ENCODE measurements at regions of chr6 and their contacts with region 1.

Region 1: DNA sequence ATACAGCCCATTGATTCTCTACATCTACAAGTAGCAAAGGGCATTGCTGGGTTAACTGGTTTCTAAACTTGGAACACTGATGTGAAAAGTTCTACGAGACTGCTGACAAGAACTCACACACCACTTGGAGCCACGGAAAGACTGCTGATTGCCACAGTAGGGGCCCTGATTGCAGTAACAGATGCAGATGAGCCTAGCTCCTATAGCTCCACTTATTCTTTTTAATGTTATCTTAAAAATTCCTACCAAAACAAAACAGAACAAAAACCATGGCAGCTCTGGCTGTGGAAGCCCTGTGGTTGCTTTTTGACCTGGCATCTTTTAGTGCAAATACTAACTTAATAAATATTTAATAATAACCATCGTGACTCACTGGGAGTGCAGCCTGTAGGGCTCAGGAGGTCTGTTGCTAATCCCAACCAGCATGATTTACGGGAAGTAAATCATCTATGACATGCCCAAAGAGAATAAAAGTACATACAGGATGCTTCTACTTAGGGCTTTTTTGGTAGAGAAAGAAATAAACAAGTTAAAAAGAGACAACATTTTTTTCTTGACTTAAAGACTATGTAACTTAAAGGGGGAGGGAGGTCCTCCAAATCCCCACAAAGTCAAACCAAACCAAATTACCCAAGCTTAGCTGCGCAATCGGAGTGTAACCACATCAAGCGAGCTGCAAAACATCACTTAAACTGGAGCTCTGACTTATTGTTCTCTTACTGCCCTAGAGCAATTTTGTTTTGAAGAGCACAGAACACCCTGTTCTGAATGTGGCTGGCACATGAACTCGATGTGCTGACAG is 87.2 kb downstream of the FKBP5 start:
- DNase-seq: peak in 1 of 2 donors; percentile 25
- ATAC-seq: peak; percentile 72 to 92 (median 88)
- H3K4me3 ChIP-seq: peak overlapping the region in 7 of 10 donors; percentile 2 to 41 (median 29)
- H3K27ac ChIP-seq: peak overlapping the region; percentile 84 to 96 (median 91)
- H3K4me1 ChIP-seq: peaks cover 14 to 94% (median 46%) of the 10 kb centered on the region in 9 donors
- H3K27me3 ChIP-seq: no peaks in the 10 kb centered on the region
- CTCF ChIP-seq: no peak

Region 2: DNA sequence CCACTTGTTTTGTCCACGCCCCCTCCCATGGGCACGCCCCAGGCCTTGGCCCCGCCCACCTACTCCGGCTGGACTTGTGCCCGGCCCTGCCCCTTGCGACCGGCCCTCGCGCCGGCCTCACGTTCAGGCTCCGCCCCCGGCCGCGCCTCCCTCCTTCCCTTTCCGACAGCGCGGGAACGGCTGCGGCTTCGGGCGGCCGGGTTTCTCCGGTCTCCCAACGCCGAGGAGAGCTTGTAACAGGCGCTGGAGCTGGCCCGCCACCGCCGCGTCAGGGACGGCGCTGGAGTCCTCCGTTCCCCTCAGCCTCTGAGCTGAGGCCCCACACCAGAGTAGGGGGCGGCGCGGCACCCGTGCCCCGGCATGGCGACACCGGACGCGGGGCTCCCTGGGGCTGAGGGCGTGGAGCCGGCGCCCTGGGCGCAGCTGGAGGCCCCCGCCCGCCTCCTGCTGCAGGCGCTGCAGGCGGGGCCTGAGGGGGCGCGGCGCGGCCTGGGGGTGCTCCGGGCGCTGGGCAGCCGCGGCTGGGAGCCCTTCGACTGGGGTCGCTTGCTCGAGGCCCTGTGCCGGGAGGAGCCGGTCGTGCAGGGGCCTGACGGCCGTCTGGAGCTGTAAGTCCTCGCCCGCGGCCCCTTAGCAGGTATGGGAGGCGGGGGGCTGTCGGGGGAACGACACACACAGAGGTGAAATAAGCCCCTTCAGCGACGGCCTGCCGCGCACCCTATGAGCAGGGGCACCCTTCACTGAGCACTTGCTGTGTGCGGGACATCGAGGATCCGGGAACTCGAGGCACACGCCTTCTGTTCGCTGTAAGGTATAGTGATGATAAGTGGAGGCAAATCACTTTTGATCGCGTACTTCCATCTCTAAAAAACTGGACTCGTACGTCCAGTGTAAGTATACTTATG is 149.1 kb before region 1 on chr6 and contains the start of gene FANCE:
- intact Hi-C with region 1: no loop called
- DNase-seq: peak; percentile 94 to 97
- ATAC-seq: peak; percentile 95 to 98 (median 96)
- H3K4me3 ChIP-seq: peak within 1 kb of the TSS; percentile 2 to 79 (median 66)
- H3K27ac ChIP-seq: peak within 1 kb of the TSS; percentile 14 to 86 (median 74)
- H3K4me1 ChIP-seq: peaks cover 3 to 44% (median 29%) of the 10 kb centered on the region in 9 donors
- H3K27me3 ChIP-seq: no peaks in the 10 kb centered on the region
- CTCF ChIP-seq: no peak
- total RNA-seq, gene FANCE: 1.5 to 5.3 (median 3.0) TPM

Region 3: DNA sequence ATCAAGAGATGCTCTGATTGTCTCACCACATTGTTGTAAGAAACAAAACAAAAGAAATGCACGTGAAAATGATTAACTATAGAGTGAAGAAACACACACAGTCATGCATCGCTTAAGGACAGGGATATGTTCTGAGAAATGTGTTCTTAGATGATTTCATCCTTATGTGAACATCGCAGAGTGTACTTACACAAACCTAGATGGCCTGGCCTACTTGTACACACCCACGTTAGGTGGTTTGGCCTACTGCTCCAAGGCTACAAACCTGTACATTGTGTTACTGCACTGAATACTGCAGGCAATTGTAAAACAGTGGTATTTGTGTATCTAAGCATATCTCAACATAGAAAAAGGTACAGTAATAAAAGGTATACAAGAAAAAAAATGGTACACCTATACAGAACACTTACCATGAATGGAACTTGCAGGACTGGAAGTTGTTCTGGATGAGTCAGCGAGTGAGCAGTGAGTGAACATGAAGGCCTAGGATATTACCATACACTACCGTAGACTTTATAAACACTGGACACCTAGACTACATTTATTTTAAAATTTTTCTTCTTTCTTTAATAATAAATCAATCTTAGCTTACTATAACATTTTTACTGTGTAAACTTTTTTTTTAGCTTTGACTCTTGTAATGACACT is 38.6 kb after region 1 on chr6:
- intact Hi-C with region 1: loop called in 1 of 10 experiments (anchors 1 kb)
- DNase-seq: no peak
- ATAC-seq: no peak
- H3K4me3 ChIP-seq: no peak overlapping the region
- H3K27ac ChIP-seq: no peak overlapping the region
- H3K4me1 ChIP-seq: peaks cover 0 to 12% (median 0%) of the 10 kb centered on the region in 9 donors
- H3K27me3 ChIP-seq: no peaks in the 10 kb centered on the region
- CTCF ChIP-seq: no peak

Region 4: GRCh38 chr6:35698858-35699257 is 97.3 kb after region 1 on chr6:
- intact Hi-C with region 1: no loop called
- DNase-seq: no peak
- ATAC-seq: no peak
- H3K4me3 ChIP-seq: no peak overlapping the region
- H3K27ac ChIP-seq: no peak overlapping the region
- H3K4me1 ChIP-seq: no peaks in the 10 kb centered on the region
- H3K27me3 ChIP-seq: no peaks in the 10 kb centered on the region
- CTCF ChIP-seq: no peak

Region 5: DNA sequence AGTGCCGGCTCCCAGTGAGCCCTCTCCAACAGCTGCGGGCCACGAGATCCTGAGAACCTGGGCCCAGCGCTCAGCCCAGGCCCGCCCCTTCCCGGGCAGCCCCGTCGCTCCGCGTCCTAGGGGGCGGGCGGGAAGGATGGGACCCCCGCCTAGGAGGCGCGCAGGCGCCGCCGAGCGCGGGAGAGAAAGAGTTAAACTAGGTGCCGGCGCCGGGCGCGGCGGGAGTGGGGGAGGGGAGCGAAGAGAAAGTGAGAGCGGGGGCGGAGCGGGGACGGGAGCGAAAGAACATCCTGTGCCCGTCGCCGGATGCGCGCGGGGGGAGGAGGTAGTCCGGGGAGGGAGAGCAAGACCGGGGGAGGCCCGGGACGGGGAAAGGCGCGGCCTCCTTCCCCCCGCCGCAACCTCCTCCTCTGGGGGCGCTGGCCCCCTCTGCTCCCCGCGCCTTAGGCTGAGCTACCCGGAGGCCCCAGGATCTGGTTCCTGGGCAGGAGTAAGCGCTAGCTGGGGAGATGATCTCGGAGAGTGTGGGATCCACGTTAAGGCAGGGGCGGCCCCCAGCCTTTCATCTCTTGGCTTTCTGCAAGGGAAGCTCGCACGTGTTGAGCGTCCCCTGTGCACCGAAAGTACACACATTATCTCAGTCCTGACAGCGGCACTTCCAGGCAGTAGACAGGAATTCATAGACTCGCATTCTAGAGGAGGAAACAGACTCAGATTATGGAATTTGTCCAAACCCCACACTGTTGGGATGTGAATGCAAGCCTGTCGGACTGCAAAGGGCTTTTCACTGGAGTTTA is 130.4 kb after region 1 on chr6:
- intact Hi-C with region 1: loop called in 4 of 10 experiments (anchors 1 to 5 kb)
- DNase-seq: peak; percentile 95 to 98
- ATAC-seq: peak; percentile 60 to 86 (median 77)
- H3K4me3 ChIP-seq: peak overlapping the region; percentile 42 to 96 (median 84)
- H3K27ac ChIP-seq: peak overlapping the region; percentile 98 to 100 (median 100)
- H3K4me1 ChIP-seq: peaks cover 21 to 80% (median 56%) of the 10 kb centered on the region in 9 donors
- H3K27me3 ChIP-seq: no peaks in the 10 kb centered on the region
- CTCF ChIP-seq: peak in 5 of 9 donors; percentile 9 to 47 (median 21)

Region 6: DNA sequence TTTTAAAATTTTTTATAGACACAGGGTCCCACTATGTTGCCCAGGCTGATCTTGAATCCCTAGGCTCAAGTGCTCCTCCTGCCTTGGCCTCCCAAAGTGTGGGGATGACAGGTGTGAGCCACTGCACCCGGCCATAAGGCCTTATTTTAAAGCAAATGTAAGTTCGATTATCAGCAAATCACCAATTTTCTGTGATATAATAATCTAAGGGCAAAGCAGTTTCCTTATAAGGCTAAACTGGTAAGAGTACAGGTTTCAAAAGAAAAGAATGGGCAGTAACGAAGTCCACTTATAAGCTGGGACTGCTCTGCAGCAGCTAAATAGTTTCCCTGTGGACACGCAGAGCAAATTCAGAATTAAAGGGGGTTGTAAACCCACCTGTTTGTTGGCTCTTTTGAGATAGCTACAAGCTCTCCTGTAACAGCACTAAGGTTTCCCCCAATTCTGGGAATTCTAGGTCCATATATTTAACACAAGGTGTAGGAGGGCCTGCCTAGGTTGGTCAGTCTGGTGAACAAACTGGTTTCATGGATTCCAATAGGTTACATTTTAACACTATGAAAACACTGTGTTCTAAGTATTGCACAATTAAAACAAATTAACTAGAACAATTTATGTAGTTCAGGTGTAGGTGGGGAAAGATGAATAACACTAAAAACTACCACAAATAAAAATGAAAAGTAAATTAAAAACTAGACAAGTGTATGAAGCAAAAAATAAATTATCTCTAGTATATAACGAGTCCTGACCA is 229.9 kb after region 1 on chr6:
- intact Hi-C with region 1: no loop called
- DNase-seq: no peak
- ATAC-seq: no peak
- H3K4me3 ChIP-seq: no peak overlapping the region
- H3K27ac ChIP-seq: no peak overlapping the region
- H3K4me1 ChIP-seq: no peaks in the 10 kb centered on the region
- H3K27me3 ChIP-seq: peaks cover 0 to under 1% (median 0%) of the 10 kb centered on the region in 7 donors
- CTCF ChIP-seq: no peak

Region 7: DNA sequence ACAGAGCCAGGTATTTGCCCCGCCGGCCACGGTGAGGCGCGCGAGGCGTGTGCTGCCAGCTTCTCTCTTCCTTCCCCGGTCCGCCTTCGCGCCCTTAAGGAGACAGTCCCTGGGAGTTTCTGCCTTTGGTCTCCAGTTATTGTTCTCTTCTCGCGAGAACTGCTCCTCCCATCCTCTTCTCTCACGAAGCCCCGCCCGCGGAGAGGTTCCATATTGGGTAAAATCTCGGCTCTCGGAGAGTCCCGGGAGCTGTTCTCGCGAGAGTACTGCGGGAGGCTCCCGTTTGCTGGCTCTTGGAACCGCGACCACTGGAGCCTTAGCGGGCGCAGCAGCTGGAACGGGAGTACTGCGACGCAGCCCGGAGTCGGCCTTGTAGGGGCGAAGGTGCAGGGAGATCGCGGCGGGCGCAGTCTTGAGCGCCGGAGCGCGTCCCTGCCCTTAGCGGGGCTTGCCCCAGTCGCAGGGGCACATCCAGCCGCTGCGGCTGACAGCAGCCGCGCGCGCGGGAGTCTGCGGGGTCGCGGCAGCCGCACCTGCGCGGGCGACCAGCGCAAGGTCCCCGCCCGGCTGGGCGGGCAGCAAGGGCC is 426.1 kb after region 1 on chr6 and contains the start of gene MAPK14:
- intact Hi-C with region 1: no loop called
- DNase-seq: peak; percentile 99 to 100
- ATAC-seq: peak; percentile 96 to 98 (median 96)
- H3K4me3 ChIP-seq: peak within 1 kb of the TSS; percentile 82 to 100 (median 96)
- H3K27ac ChIP-seq: peak within 1 kb of the TSS; percentile 84 to 96 (median 94)
- H3K4me1 ChIP-seq: peaks cover 5 to 49% (median 29%) of the 10 kb centered on the region in 9 donors
- H3K27me3 ChIP-seq: peaks cover 0 to 21% (median 18%) of the 10 kb centered on the region in 7 donors
- CTCF ChIP-seq: peak; percentile 86 to 98 (median 91)
- total RNA-seq, gene MAPK14: 25.0 to 38.1 (median 29.4) TPM

Measured in heart right ventricle (tissue), 16 donors.